OCI-LY7 (cell line): ENCODE measurements at regions of chr6 and their contacts with region 1.

Region 1: GRCh38 chr6:110653381-110653780 is 161.9 kb downstream of the CDK19 start:
- DNase-seq: no peak
- H3K4me3 ChIP-seq: no peak overlapping the region
- H3K27ac ChIP-seq: no peak overlapping the region
- H3K4me1 ChIP-seq: no peaks in the 10 kb centered on the region
- CTCF ChIP-seq: no peak

Region 2: GRCh38 chr6:110643175-110643574 is 10.2 kb before region 1 on chr6:
- CTCF ChIA-PET with region 1: no interaction called
- POLR2A ChIA-PET with region 1: interaction called, 13 read pairs
- intact Hi-C with region 1: no loop called
- DNase-seq: no peak
- H3K4me3 ChIP-seq: no peak overlapping the region
- H3K27ac ChIP-seq: no peak overlapping the region
- H3K4me1 ChIP-seq: no peaks in the 10 kb centered on the region
- CTCF ChIP-seq: no peak

Region 3: DNA sequence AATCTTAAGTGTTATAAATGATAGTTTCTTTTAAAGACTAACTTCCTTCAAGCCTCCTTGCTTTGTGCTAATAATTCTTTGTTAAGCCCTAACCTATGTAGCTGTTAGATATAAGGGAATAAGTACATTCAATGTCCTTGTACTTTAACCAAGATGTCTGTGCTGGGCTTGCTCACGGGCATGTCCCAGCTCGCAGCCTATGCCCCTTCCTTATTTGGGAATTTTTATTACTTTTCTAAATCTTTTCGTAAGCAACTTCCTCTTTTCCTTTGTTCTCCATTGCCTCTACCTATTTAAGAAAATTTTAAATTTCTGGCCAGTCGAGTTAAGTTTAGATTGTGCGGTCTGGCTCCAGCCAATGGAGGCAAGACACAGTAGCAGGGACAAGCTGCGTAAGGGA is 187.9 kb after region 1 on chr6:
- CTCF ChIA-PET with region 1: no interaction called
- POLR2A ChIA-PET with region 1: no interaction called
- intact Hi-C with region 1: no loop called
- DNase-seq: no peak
- H3K4me3 ChIP-seq: no peak overlapping the region
- H3K27ac ChIP-seq: no peak overlapping the region
- H3K4me1 ChIP-seq: no peaks in the 10 kb centered on the region
- CTCF ChIP-seq: no peak

Region 4: GRCh38 chr6:110981202-110981600 is 327.8 kb after region 1 on chr6:
- CTCF ChIA-PET with region 1: no interaction called
- POLR2A ChIA-PET with region 1: no interaction called
- intact Hi-C with region 1: no loop called
- DNase-seq: no peak
- H3K4me3 ChIP-seq: peak overlapping the region; percentile 92
- H3K27ac ChIP-seq: peak overlapping the region; percentile 48
- H3K4me1 ChIP-seq: peaks cover 30% of the 10 kb centered on the region
- CTCF ChIP-seq: no peak